ENCODE measurements at regions of chr1 and their contacts with region 1.

Region 1: DNA sequence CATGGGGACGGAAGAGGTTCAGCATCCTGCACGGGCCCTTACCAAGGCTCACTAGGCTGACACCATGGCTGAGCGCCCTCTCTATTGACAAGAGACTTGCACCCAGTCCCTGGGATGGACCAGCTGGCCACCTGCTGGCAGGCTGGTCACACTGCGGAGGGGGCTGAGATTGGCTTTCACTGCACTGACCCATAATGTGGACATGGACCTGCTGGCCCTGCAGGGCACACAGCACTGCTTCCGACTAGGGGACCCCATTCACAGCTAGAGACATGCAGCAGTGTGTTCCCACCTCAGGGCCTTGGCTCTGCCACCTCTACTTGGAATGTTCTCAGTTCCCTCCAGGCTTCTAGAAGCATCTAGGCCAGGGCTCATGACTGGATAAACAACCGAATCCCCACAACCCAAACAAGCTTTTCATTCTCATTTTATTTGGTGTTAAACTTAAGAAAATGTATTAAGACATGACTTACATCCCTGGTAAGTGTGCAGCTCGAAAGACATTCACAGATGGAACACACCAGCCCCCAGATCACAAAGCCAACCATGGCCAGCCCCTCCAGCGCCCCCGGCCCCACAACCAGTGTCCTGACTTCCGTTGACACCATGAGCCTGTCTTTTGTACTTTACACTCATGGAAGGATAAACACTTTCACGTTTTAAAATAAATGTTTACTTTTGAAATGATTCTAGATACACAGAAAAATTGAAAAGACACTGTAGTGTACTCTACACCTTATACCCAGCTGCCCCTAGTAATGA is 9.3 kb upstream of the SRARP start:
- DNase-seq: peak; percentile 29
- H3K4me3 Mint-ChIP-seq: no peak overlapping the region
- H3K27ac Mint-ChIP-seq: no peak overlapping the region
- H3K4me1 Mint-ChIP-seq: no peaks in the 10 kb centered on the region
- H3K27me3 Mint-ChIP-seq: peaks cover 2% of the 10 kb centered on the region

Region 2: GRCh38 chr1:15454256-15454655 is 540.5 kb before region 1 on chr1:
- intact Hi-C with region 1: no loop called
- DNase-seq: no peak
- H3K4me3 Mint-ChIP-seq: no peak overlapping the region
- H3K27ac Mint-ChIP-seq: no peak overlapping the region
- H3K4me1 Mint-ChIP-seq: no peaks in the 10 kb centered on the region
- H3K27me3 Mint-ChIP-seq: peaks cover 4% of the 10 kb centered on the region

Region 3: DNA sequence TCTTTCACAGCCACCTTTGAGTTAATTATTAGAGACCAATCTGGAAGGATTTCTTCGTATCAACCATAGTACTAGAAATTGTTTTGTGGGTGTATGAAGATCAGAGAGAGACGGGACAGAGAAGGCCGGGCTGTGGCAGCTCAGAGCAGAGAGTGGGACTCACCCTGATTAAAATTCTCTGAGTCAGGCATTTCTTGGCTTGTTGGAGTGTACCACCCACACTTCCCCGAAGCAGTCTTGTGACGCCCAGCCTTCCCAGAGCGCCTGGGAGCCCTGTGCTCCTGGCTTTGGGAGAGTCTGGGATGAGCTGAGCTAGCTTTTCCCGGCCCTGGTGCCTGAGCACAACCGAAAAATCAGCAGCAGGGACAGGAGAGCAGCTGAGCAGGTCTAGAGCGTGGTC is 291.2 kb before region 1 on chr1:
- intact Hi-C with region 1: no loop called
- DNase-seq: no peak
- H3K4me3 Mint-ChIP-seq: no peak overlapping the region
- H3K27ac Mint-ChIP-seq: no peak overlapping the region
- H3K4me1 Mint-ChIP-seq: peaks cover 20% of the 10 kb centered on the region
- H3K27me3 Mint-ChIP-seq: no peaks in the 10 kb centered on the region

Region 4: DNA sequence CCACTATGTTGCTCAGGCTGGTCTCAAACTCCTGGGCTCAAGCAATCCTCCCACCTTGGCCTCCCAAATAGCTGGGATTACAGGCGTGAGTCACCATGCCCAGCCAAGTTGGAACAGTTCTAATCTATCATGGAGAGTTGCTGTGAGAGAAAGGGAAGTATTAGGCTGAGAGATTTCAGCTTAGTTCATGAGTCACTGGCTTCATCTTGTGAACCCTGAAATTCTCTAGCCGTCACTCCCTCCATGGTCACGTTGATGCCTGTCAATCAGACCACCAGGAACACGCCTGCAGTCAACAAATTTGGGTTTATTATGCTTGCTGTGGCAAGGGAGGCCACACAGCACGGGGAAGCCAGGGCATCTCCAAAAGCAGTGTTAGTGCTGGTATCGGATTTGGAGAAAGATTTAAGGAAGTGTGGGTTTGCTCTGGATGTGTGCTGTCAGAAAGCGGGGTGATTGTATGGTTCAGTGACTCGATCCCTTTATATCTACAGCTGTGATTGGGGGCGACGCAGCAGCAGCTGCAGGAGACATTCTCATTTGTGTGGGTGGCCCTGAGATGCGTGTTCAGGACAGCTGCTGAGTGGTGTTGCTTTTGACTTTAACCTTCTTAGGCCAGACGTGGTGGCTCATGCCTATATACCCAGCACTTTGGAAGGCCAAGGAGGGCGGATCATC is 206.0 kb before region 1 on chr1:
- intact Hi-C with region 1: loop called (anchors 1 kb)
- DNase-seq: no peak
- H3K4me3 Mint-ChIP-seq: no peak overlapping the region
- H3K27ac Mint-ChIP-seq: no peak overlapping the region
- H3K4me1 Mint-ChIP-seq: no peaks in the 10 kb centered on the region
- H3K27me3 Mint-ChIP-seq: peaks cover 7% of the 10 kb centered on the region

Region 5: DNA sequence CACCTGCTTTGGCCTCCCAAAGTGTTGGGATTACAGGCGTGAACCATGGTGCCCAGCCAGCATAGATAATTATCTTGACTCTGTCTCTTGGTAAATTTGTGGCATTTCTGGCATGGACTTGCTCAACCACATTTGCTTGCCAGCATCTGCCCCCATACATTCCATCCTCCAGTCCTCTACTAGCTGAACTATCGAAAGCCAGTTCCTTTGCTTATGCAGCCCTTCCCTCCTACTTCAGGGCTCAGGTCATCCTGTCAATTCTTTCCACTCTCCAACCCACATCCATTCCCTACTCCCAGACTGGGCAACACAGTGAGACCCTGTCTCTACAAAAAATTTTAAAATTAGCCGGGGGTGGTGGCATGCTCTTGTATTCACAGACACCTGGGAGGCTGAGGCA is 174.3 kb before region 1 on chr1:
- intact Hi-C with region 1: loop called (anchors 1 kb)
- DNase-seq: no peak
- H3K4me3 Mint-ChIP-seq: no peak overlapping the region
- H3K27ac Mint-ChIP-seq: no peak overlapping the region
- H3K4me1 Mint-ChIP-seq: peaks cover 10% of the 10 kb centered on the region
- H3K27me3 Mint-ChIP-seq: no peaks in the 10 kb centered on the region

Region 6: GRCh38 chr1:15966081-15966955 is 28.5 kb before region 1 on chr1:
- intact Hi-C with region 1: no loop called
- DNase-seq: peak; percentile 72
- H3K4me3 Mint-ChIP-seq: peak overlapping the region; percentile 79
- H3K27ac Mint-ChIP-seq: peak overlapping the region; percentile 95
- H3K4me1 Mint-ChIP-seq: peaks cover 77% of the 10 kb centered on the region
- H3K27me3 Mint-ChIP-seq: no peaks in the 10 kb centered on the region

Region 7: DNA sequence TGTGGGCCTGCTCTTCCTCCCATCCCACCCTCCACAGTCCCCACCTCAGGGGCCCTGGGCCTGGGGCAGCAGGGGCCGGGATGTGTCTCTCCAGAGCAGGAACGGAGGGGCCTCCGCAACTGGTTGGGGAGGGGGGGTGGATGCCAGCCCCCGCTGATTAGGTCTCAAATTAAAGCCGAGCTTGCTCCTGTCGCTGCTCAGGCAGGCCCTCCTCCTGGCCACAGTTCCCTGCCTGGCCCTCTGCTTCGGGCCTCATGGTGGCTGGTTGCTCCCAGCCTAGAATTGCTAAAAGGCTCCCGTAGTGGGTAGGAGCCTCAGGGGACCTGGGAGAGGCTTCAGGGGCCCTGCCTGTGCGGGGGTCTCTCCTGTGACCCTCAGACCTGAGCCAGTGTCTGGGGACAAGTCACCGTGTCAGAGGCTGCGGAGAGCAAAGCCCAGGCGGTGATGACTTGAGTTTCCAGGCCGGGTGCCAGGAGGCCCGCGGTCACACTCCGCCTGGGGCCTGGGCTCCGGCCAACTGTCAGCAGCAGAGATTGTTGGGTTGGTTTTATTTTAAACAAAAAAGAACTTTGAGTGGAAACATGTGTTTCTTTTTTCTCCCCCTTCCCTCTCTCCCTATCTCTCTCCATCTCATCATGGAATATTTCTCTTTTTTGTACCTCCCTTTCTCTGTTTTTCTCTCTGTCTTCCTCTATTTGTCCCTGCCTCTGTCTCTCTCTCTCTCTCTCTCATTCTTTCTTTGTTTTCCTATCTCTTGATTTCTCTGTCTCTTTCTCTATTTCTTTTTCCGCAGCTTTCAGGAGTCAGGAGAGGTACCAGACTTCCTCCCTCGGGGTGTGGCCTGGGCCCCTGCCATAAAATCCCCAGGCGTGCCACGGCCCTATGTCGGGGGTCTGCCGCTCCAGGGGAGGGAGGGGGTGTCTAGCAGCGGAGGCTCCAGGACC is 181.1 kb after region 1 on chr1:
- intact Hi-C with region 1: no loop called
- DNase-seq: no peak
- H3K4me3 Mint-ChIP-seq: no peak overlapping the region
- H3K27ac Mint-ChIP-seq: no peak overlapping the region
- H3K4me1 Mint-ChIP-seq: no peaks in the 10 kb centered on the region
- H3K27me3 Mint-ChIP-seq: peaks cover 15% of the 10 kb centered on the region